ENCODE measurements at regions of chr12 and their contacts with region 1.

Region 1: DNA sequence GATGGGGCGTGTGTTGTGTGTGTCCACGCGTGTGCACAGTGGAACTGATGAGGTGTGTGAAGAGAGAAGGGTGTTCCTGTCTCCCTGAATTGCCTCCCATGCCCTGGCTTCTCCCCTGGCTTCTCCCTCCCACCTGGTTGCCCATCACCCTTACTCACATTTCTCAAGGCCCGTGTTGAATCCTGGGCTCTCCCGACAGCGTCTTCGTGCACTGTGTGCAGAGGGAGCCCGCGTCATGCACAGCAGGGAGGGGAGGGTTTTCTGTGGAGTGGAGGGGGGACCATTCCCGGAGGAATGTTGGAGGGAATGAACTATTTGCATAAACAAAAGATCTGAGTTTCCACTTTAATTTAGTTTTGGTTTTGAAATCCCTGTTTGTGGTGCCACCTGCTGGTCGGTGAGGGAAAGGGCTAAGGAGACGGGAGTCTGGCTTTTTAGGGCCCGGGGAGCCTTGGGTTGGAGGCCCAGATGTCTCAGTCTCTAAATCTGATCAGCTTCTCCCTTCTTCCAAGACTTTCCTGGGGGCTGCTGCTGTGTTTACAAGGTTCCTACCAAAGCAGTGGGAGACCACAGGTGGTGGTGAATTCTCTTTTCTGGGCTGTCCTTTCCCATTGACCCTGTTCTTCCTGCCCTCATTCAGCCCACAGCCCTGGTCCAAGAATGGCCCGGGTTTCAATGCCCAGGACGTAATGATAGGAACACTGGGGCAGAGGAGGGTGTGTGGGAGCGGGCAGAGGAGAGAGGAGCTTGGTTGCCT is at the start of gene C1R:
- DNase-seq: peak; percentile 58 to 71 (median 60)
- ATAC-seq: peak; percentile 76
- H3K4me3 ChIP-seq: no peak within 1 kb of the TSS
- H3K27ac ChIP-seq: no peak within 1 kb of the TSS
- H3K4me1 ChIP-seq: peaks cover 6 to 24% of the 10 kb centered on the region in 2 experiments; a peak in 3 of 5 replicates
- H3K27me3 ChIP-seq: no peaks in the 10 kb centered on the region; a peak in 1 of 5 replicates
- CTCF ChIP-seq: peak; percentile 61 to 84 (median 81)
- EP300 ChIP-seq: no peak
- POLR2A ChIP-seq: no peak
- RAD21 ChIP-seq: peak; percentile 60 to 67
- polyA plus RNA-seq, gene C1R: 0.07 TPM in 1 of 2 experiments, not detected in the other

Region 2: GRCh38 chr12:7108796-7109571 is 16.6 kb after region 1 on chr12 and contains the start of gene C1RL:
- CTCF ChIA-PET with region 1: no interaction called
- POLR2A ChIA-PET with region 1: interaction called, 8 read pairs
- in situ Hi-C with region 1: no loop called
- intact Hi-C with region 1: loop called (anchors 2 kb)
- DNase-seq: peak; percentile 66 to 88 (median 68)
- ATAC-seq: peak; percentile 58
- H3K4me3 ChIP-seq: peak within 1 kb of the TSS; percentile 75
- H3K27ac ChIP-seq: peak within 1 kb of the TSS; percentile 97
- H3K4me1 ChIP-seq: peaks cover 10 to 21% of the 10 kb centered on the region in 2 experiments
- H3K27me3 ChIP-seq: no peaks in the 10 kb centered on the region
- CTCF ChIP-seq: peak; percentile 83 to 93 (median 86)
- EP300 ChIP-seq: peak; percentile 62
- POLR2A ChIP-seq: peak; percentile 52; the same call in 1 of the 2 replicates
- RAD21 ChIP-seq: peak; percentile 63 to 73
- polyA plus RNA-seq, gene C1RL: 1.4 to 1.9 TPM

Measured in K562 (cell line).